Activated CD4-positive, alpha-beta memory T cell treated with anti-CD3 and anti-CD28 coated beads for 36 hours (primary cell): ENCODE measurements at regions of chr4 and their contacts with region 1.

Region 1: DNA sequence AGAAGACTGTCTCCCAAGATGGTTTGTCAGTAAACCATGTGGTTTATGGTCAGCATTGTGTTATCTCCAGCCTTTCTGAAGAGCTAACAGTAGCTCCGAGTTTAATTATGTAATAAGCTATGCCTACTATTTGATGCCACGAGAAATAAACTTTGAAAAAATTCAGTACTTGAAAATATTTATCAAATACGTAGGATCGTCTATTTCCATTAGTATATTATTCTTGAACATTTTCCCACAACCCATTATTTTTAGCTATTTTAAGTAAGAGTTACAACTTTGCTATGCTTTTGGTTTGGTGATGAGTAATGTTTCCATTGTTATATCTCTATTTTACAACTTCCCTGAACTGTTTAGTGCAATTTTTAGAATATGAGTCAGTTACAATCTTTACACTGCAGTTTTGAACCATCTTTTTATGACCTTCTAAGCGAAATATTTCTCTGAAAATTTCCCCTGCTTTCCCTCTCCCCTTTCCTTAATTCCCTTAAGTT is 44.5 kb upstream of the TRIM2 start:
- DNase-seq: no peak
- H3K4me3 Mint-ChIP-seq: peak overlapping the region; percentile 30
- H3K27ac Mint-ChIP-seq: peak overlapping the region; percentile 68
- H3K4me1 Mint-ChIP-seq: peaks cover 45% of the 10 kb centered on the region
- H3K27me3 Mint-ChIP-seq: peaks cover 5% of the 10 kb centered on the region

Region 2: GRCh38 chr4:153204247-153205027 is 44.7 kb after region 1 on chr4 and contains the start of gene TRIM2:
- CTCF ChIA-PET with region 1: interaction called, 4 read pairs
- POLR2A ChIA-PET with region 1: interaction called, 4 read pairs
- intact Hi-C with region 1: loop called (anchors 1 kb)
- DNase-seq: no peak
- H3K4me3 Mint-ChIP-seq: peak within 1 kb of the TSS; percentile 64
- H3K27ac Mint-ChIP-seq: peak within 1 kb of the TSS; percentile 66
- H3K4me1 Mint-ChIP-seq: peaks cover 35% of the 10 kb centered on the region
- H3K27me3 Mint-ChIP-seq: no peaks in the 10 kb centered on the region
- total RNA-seq, gene TRIM2: 1.7 to 2.9 TPM